ENCODE measurements at regions of chr9 and their contacts with region 1.

Region 1: DNA sequence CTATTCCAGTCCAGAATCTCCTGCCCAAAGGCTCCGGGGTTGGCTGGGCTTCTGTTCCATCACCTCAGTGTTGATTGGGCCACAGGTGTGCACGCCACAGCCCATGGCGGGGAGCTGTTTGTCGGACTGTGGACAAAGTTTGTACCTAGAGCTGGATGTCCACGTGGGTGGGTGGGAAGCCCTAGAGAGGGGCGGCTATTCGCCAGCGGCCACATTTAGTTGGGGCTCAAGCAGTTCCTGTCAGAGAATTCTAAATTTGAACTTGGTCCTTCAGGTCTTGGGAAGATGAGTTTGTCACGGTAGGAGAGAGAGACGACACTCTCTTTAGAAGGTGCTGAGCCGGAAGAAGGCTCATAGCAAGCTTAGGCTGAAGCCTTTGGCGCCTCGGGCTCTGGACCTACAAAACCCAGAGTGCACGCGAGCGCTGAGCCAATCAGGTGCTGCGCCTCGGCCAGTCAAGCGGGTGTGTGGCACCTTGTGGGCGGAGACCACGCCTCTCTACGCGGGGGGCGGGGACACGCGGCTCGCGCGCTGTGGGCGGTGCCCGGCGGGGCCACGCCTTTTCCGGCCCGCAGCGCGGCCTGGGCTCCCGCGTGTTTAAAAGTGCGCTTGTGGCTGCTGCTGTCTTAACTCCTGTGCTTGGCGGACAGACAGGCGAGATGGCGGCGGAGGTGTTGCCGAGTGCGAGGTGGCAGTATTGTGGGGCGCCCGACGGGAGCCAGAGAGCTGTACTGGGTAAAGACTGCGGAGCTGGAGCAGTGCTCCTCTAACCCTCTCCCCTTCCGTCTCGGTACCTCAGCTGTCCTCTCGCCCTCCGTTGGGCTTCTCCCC is at the start of gene POLR1E:
- DNase-seq: peak; percentile 98 to 100 (median 100)
- ATAC-seq: peak; percentile 97
- H3K4me3 ChIP-seq: peak within 1 kb of the TSS; percentile 60
- H3K27ac ChIP-seq: peak within 1 kb of the TSS; percentile 78
- H3K4me1 ChIP-seq: peaks cover 20 to 21% of the 10 kb centered on the region in 2 experiments; a peak in 4 of 5 replicates
- H3K27me3 ChIP-seq: no peaks in the 10 kb centered on the region
- CTCF ChIP-seq: no peak
- EP300 ChIP-seq: no peak
- POLR2A ChIP-seq: peak; percentile 97
- RAD21 ChIP-seq: no peak
- polyA plus RNA-seq, gene POLR1E: 18.9 to 39.4 TPM

Region 2: DNA sequence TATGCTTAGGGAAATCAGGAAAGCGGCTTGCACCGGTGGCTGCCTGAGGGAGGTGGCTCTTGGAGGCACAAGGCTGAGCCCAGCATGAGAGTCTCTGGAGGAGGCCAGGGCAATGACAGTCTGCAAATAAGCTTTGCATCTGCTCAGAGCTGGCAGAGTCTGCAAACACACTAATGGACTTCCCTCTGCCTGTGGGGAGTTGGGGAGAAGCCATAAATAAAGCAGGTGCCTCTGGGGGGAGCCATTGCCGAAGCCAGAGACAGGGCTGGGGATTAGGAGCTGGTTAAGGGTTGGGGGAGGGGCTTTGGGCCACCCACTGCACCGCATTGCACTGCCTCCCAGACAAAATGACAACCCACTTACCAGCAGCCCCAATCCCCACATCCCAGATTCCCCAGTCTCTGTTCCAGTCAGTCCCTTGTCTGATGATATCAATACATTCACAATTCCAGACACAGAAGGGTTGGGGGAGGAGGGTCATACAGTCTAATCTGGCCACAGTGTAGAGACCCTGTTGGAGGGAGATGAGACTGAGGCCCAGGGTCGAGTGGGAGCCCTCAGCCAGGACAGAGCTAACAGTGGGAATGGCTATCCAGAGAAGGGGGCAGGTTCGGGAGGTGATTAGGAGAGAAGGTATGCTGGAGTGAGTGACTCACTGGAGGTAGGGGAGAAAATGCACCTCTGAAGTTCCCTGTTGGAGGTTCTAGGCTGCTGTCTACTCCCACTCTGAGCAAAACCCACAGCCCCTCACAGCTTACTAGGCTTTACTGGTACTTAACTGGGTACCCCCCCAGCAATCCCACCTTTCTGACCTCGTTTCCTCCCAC is 505.2 kb before region 1 on chr9:
- CTCF ChIA-PET with region 1: no interaction called
- POLR2A ChIA-PET with region 1: no interaction called
- in situ Hi-C with region 1: no loop called
- intact Hi-C with region 1: no loop called
- DNase-seq: peak; percentile 24 to 35 (median 27)
- ATAC-seq: peak; percentile 80
- H3K4me3 ChIP-seq: no peak overlapping the region
- H3K27ac ChIP-seq: no peak overlapping the region
- H3K4me1 ChIP-seq: no peaks in the 10 kb centered on the region
- H3K27me3 ChIP-seq: peaks cover 6 to 18% of the 10 kb centered on the region in 2 experiments; a peak in 3 of 5 replicates
- CTCF ChIP-seq: peak; percentile 34 to 43 (median 39); a peak in 5 of 6 replicates
- EP300 ChIP-seq: no peak
- POLR2A ChIP-seq: no peak
- RAD21 ChIP-seq: peak in 1 of 2 experiments; percentile 42; a peak in 2 of 4 replicates

Region 3: DNA sequence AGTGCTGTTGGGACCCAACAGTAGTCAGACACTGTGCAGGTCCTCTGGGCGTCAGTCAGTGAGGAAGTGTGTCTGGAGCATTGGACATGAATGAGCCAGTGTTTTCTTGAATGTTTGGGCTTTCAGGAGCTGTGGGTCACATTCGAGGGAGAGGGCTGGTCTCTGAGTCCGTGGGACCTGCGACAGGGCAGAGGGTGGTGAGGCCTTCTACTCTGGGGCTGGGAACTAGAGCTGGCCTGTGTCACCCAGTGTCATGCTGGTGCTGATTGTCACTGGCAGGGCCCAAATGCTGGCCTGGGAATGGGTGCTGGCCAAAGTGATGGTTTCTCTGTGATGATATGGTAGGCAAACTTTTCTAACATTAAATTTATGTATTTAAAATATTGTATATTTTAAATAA is 10.4 kb after region 1 on chr9:
- CTCF ChIA-PET with region 1: no interaction called
- POLR2A ChIA-PET with region 1: interaction called, 44 read pairs
- in situ Hi-C with region 1: no loop called
- intact Hi-C with region 1: no loop called
- DNase-seq: peak in 1 of 4 experiments; percentile 5
- ATAC-seq: no peak; the same call in 2 of the 3 replicates
- H3K4me3 ChIP-seq: no peak overlapping the region
- H3K27ac ChIP-seq: no peak overlapping the region; the same call in 2 of the 3 replicates
- H3K4me1 ChIP-seq: no peaks in the 10 kb centered on the region
- H3K27me3 ChIP-seq: no peaks in the 10 kb centered on the region
- CTCF ChIP-seq: no peak
- EP300 ChIP-seq: no peak
- POLR2A ChIP-seq: 0 out of 2 replicates have a peak, but pooled peaks have one; percentile 33
- RAD21 ChIP-seq: no peak

Region 4: GRCh38 chr9:37592108-37592951 is 106.7 kb after region 1 on chr9 and contains the start of gene TOMM5:
- CTCF ChIA-PET with region 1: no interaction called
- POLR2A ChIA-PET with region 1: interaction called, 3 read pairs
- in situ Hi-C with region 1: no loop called
- intact Hi-C with region 1: loop called (anchors 5 kb)
- DNase-seq: peak; percentile 88 to 97 (median 90)
- ATAC-seq: peak; percentile 92
- H3K4me3 ChIP-seq: peak within 1 kb of the TSS; percentile 57
- H3K27ac ChIP-seq: peak within 1 kb of the TSS; percentile 87
- H3K4me1 ChIP-seq: peaks cover 20 to 31% of the 10 kb centered on the region in 2 experiments
- H3K27me3 ChIP-seq: no peaks in the 10 kb centered on the region
- CTCF ChIP-seq: no peak; a peak in 1 of 6 replicates
- EP300 ChIP-seq: peak; percentile 52
- POLR2A ChIP-seq: peak; percentile 99
- RAD21 ChIP-seq: no peak
- polyA plus RNA-seq, gene TOMM5: 1,739 to 1,742 TPM

Region 5: DNA sequence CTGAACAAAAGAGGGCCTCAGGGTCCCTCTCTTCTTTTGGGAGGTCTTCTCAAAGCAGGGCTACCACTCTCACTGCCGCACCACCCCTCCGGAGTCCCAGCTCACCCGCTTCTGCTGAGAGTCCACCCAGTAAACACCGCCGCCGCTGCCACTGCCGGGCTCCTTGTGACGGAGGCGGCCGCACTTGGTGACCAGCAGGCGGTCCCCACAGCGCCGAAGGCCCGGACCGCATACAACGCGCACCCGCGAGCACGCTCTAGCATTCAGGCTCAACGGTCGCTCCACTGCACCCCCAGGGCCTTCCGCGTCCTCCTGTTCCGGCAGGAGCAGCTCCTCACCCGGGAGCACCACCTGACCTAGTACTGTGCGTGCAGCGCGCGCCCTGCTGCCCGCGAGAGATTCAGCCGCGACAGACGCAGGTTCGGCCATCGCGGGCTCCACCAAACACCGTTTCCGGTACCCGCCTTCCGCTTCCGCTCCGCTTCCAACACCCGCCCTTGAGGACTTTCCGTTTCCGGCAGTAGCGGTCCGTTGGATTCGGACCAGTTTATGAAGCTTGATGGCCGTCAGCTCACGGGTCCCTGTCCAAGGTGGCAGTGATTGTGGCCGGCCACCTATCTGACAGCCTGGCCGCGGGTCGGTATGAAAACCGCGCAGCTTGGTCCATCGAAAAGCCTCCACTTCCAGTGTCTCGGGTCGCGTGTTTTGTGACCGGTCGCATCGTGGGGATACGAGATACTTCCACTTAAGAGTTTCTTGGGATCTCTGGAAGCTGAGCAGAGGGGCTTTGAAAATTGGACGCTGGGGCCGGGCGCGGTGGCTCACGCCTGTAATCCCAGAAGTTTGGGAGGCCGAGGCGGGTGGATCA is 299.2 kb after region 1 on chr9 and contains the start of gene EXOSC3:
- CTCF ChIA-PET with region 1: no interaction called
- POLR2A ChIA-PET with region 1: no interaction called
- in situ Hi-C with region 1: loop called (anchors 5 kb)
- intact Hi-C with region 1: no loop called
- DNase-seq: peak; percentile 88 to 98 (median 90)
- ATAC-seq: peak; percentile 97
- H3K4me3 ChIP-seq: peak within 1 kb of the TSS; percentile 82
- H3K27ac ChIP-seq: peak within 1 kb of the TSS; percentile 91
- H3K4me1 ChIP-seq: peaks cover 8 to 24% of the 10 kb centered on the region in 2 experiments; a peak in 4 of 5 replicates
- H3K27me3 ChIP-seq: no peaks in the 10 kb centered on the region
- CTCF ChIP-seq: peak; percentile 26 to 41 (median 29); a peak in 3 of 6 replicates
- EP300 ChIP-seq: no peak
- POLR2A ChIP-seq: peak; percentile 98
- RAD21 ChIP-seq: peak in 1 of 2 experiments; percentile 38; a peak in 1 of 4 replicates
- polyA plus RNA-seq, gene EXOSC3: 18.5 to 29.6 TPM

Region 6: GRCh38 chr9:38160613-38161215 is 675.1 kb after region 1 on chr9:
- CTCF ChIA-PET with region 1: no interaction called
- POLR2A ChIA-PET with region 1: no interaction called
- in situ Hi-C with region 1: no loop called
- intact Hi-C with region 1: loop called (anchors 5 kb)
- DNase-seq: peak; percentile 79 to 89 (median 86)
- ATAC-seq: peak; percentile 94
- H3K4me3 ChIP-seq: no peak overlapping the region
- H3K27ac ChIP-seq: no peak overlapping the region
- H3K4me1 ChIP-seq: no peaks in the 10 kb centered on the region
- H3K27me3 ChIP-seq: peaks cover 4 to 26% of the 10 kb centered on the region in 2 experiments; a peak in 4 of 5 replicates
- CTCF ChIP-seq: peak; percentile 88 to 92 (median 91)
- EP300 ChIP-seq: no peak
- POLR2A ChIP-seq: no peak
- RAD21 ChIP-seq: peak; percentile 75 to 82

Measured in K562 (cell line).